Activated B cell treated with CpG ODN at 0.5 μM for 24 hours (primary cell): ENCODE measurements at regions of chr20 and their contacts with region 1.

Region 1: DNA sequence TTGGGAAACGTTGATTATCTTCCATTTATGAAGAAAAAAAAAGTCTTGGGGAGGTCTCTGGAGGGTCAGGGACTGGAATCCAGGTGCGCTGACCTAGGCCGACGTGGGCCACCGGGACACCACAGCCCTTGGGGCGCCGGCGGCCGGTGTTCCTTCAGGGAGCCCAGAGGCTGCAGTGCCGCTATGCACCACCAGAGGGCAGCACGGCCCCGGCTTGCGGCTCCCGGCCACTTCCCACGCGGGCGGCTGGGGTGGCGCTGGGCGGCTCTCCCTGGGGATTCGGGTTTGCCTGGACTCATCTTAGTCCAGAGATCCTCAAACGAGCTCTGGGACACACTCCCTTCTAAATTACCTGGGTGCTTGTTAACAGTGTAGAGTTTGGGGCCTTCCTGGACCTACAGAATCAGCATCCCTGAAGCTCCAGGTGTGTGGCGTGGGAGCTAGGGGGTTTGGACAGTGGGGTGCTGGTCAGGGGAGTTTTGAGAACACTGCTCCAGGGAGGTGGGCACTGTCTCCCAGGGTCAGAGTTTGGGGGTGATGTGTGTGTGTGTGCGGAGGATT is 23.0 kb upstream of the GTSF1L start:
- DNase-seq: peak; percentile 90
- ATAC-seq: peak; percentile 19
- H3K4me3 Mint-ChIP-seq: no peak overlapping the region
- H3K27ac Mint-ChIP-seq: peak overlapping the region; percentile 51
- H3K4me1 Mint-ChIP-seq: peaks cover 44% of the 10 kb centered on the region
- H3K27me3 Mint-ChIP-seq: no peaks in the 10 kb centered on the region
- CTCF ChIP-seq: peak; percentile 76

Region 2: DNA sequence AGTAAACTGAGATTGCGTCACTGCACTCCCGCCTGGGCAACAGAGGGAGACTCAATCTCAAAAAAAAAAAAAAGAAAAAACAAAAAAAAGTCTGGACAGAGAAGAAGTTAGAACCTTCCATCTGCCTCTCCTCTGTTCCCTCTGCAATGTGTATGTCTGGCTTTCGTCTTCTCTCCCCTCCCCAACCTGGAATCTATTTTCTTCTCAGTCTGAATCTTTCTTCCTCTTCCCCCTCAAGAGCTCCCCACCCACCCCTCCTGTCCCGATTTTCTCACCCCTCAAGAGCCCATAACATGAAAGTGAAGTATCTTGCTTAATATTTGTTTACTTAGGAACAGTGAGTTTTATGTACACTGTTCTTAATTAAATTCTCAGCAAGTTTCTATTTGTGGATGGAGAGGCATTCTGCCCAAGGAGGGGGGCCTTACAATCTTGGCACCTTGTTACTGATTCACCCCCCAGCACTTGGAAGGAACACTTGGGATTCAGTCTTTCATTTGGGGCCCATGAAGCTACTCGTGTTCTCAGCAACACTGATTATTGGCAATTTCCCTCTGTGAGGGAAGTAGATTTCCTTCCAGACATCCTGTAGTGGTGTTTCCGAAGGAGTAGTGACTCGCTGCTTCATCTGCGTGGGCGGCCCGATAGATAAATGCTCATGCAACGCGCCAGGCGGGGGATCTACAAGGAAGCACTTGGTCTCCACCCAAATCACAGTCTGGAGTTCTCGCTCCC is 361.4 kb before region 1 on chr20:
- CTCF ChIA-PET with region 1: no interaction called
- POLR2A ChIA-PET with region 1: no interaction called
- intact Hi-C with region 1: no loop called
- DNase-seq: no peak
- ATAC-seq: no peak
- H3K4me3 Mint-ChIP-seq: no peak overlapping the region
- H3K27ac Mint-ChIP-seq: no peak overlapping the region
- H3K4me1 Mint-ChIP-seq: no peaks in the 10 kb centered on the region
- H3K27me3 Mint-ChIP-seq: peaks cover 12% of the 10 kb centered on the region
- CTCF ChIP-seq: no peak

Region 3: GRCh38 chr20:43456809-43457639 is 292.8 kb before region 1 on chr20:
- CTCF ChIA-PET with region 1: no interaction called
- POLR2A ChIA-PET with region 1: interaction called, 16 read pairs
- intact Hi-C with region 1: no loop called
- DNase-seq: no peak
- ATAC-seq: peak; percentile 83
- H3K4me3 Mint-ChIP-seq: peak overlapping the region; percentile 95
- H3K27ac Mint-ChIP-seq: peak overlapping the region; percentile 98
- H3K4me1 Mint-ChIP-seq: peaks cover 31% of the 10 kb centered on the region
- H3K27me3 Mint-ChIP-seq: peaks cover 5% of the 10 kb centered on the region
- CTCF ChIP-seq: no peak

Region 4: GRCh38 chr20:43681468-43681942 is 68.3 kb before region 1 on chr20:
- CTCF ChIA-PET with region 1: no interaction called
- POLR2A ChIA-PET with region 1: interaction called, 33 read pairs
- intact Hi-C with region 1: loop called (anchors 1 kb)
- DNase-seq: peak; percentile 52
- ATAC-seq: peak; percentile 40
- H3K4me3 Mint-ChIP-seq: peak overlapping the region; percentile 73
- H3K27ac Mint-ChIP-seq: peak overlapping the region; percentile 97
- H3K4me1 Mint-ChIP-seq: peaks cover 64% of the 10 kb centered on the region
- H3K27me3 Mint-ChIP-seq: no peaks in the 10 kb centered on the region
- CTCF ChIP-seq: no peak

Region 5: GRCh38 chr20:43914311-43915210 is 164.7 kb after region 1 on chr20 and contains the start of gene TOX2:
- CTCF ChIA-PET with region 1: interaction called, 4 read pairs
- POLR2A ChIA-PET with region 1: interaction called, 4 read pairs
- intact Hi-C with region 1: loop called (anchors 5 kb)
- DNase-seq: peak; percentile 50
- ATAC-seq: peak; percentile 69
- H3K4me3 Mint-ChIP-seq: peak within 1 kb of the TSS; percentile 82
- H3K27ac Mint-ChIP-seq: peak within 1 kb of the TSS; percentile 54
- H3K4me1 Mint-ChIP-seq: peaks cover 43% of the 10 kb centered on the region
- H3K27me3 Mint-ChIP-seq: peaks cover 27% of the 10 kb centered on the region
- CTCF ChIP-seq: no peak
- total RNA-seq, gene TOX2: 4.8 and 5.0 TPM in 2 replicates

Region 6: GRCh38 chr20:44069203-44070011 is 319.6 kb after region 1 on chr20:
- CTCF ChIA-PET with region 1: interaction called, 5 read pairs
- POLR2A ChIA-PET with region 1: interaction called, 27 read pairs
- intact Hi-C with region 1: no loop called
- DNase-seq: peak; percentile 44
- ATAC-seq: peak; percentile 60
- H3K4me3 Mint-ChIP-seq: peak overlapping the region; percentile 80
- H3K27ac Mint-ChIP-seq: peak overlapping the region; percentile 88
- H3K4me1 Mint-ChIP-seq: peaks cover 39% of the 10 kb centered on the region
- H3K27me3 Mint-ChIP-seq: peaks cover 5% of the 10 kb centered on the region
- CTCF ChIP-seq: no peak

Region 7: DNA sequence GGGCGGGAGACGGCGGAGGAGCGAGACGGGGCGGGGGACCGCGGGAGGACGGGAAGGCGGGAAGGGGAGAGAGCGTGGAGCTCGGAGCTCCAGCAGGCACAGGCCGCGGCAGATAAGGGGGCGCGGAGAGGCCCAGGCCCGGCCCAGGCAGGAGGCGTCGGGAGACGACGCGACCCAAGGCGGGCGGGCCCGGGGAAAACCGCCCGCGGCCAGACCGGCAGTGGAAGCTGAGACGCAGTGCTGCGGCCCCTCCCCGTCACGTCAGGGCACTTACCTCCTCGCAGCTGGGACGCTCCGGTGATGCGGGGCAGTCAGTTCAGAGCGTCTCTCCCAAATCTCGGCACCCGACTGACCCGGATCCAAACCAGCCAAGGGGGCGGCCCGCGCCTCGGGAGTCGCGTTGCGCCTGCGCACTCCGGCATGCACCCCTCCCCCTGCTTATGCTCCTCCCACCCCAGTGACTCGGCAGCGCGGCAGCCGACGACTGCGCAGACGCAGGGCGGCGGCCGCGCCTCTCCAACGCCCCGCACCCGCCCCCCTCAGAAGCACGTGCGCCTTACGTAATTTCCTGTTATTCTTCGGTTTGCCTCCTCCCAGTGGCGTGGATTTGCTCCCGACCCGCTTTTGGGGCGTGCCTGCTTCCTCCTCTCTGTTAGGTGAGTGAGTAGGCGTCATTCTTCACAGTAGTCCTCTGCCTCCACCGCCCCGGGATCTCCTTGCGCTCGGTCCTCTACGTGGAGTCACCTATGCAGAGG is 460.8 kb after region 1 on chr20 and contains the start of gene OSER1:
- CTCF ChIA-PET with region 1: no interaction called
- POLR2A ChIA-PET with region 1: interaction called, 5 read pairs
- intact Hi-C with region 1: loop called (anchors 5 kb)
- DNase-seq: peak; percentile 99
- ATAC-seq: peak; percentile 80
- H3K4me3 Mint-ChIP-seq: peak within 1 kb of the TSS; percentile 98
- H3K27ac Mint-ChIP-seq: peak within 1 kb of the TSS; percentile 98
- H3K4me1 Mint-ChIP-seq: peaks cover 65% of the 10 kb centered on the region
- H3K27me3 Mint-ChIP-seq: no peaks in the 10 kb centered on the region
- CTCF ChIP-seq: no peak
- total RNA-seq, gene OSER1: 47.3 and 48.9 TPM in 2 replicates